ENCODE measurements at regions of chr7 and their contacts with region 1.

Region 1: DNA sequence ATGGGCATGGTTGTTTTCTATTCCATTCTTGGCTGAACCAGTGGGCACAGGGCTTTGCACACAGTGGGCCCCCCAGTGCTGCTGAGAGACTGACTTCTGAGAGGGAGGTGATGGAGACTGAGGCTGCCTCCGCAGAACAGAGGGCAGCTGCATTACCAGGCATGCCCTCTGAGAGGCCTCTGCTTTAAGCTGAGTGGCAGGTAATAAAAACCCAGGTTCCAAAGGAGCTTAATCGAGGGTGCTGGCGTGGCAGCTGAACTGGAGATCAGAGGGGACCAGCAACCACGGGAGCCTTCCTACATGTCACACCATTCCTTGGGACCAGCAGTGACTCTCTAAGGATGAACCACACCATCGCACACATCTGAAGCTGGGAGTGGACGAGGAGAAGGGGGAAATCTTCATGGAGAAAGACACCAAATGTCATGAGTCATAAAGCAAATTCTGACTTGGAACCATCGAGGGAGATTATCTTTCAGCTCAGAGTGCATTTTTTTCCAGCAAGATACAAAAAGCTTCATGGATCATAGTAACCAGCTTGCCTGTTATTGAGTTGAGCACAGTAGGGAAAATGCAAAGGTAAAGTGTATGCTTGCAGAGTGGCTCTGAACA is 24.6 kb downstream of the HIPK2 start:
- DNase-seq: peak in 1 of 2 donors; percentile 62
- ATAC-seq: peak; percentile 38 to 52
- H3K4me3 ChIP-seq: peak overlapping the region in 3 of 4 donors; percentile 0 to 11 (median 6)
- H3K27ac ChIP-seq: peak overlapping the region; percentile 68 to 81 (median 78)
- H3K4me1 ChIP-seq: peaks cover 57 to 64% of the 10 kb centered on the region in 2 donors
- H3K27me3 ChIP-seq: no peaks in the 10 kb centered on the region
- CTCF ChIP-seq: peak; percentile 32 to 62 (median 52)
- POLR2A ChIP-seq: no peak

Region 2: GRCh38 chr7:139651308-139651707 is 101.9 kb before region 1 on chr7:
- in situ Hi-C with region 1: loop called in 1 of 4 experiments (anchors 10 kb)
- intact Hi-C with region 1: no loop called
- DNase-seq: peak in 1 of 2 donors; percentile 45
- ATAC-seq: peak; percentile 47 to 50
- H3K4me3 ChIP-seq: no peak overlapping the region
- H3K27ac ChIP-seq: peak overlapping the region; percentile 59 to 76 (median 71)
- H3K4me1 ChIP-seq: peaks cover 29 to 31% of the 10 kb centered on the region in 2 donors
- H3K27me3 ChIP-seq: no peaks in the 10 kb centered on the region
- CTCF ChIP-seq: no peak
- POLR2A ChIP-seq: no peak

Region 3: DNA sequence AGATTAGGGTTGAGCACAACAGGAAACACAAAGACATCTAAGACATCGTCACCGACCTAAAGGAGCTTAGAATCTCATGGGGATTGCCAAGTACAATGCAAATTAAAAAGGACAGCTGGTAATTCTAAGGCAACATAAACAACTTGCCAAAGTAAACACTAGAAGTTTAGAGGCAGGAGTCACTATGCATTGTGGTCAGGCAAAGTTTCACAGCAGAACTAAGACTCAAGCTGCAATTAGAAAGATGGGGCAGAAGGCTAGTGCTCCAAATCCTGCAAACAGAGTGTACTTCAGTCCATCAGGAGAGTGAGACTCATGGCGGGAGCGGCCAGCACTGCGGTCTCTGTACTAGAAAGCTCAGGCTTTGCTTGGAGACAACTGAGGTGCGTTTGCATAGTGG is 28.1 kb before region 1 on chr7:
- in situ Hi-C with region 1: no loop called
- intact Hi-C with region 1: no loop called
- DNase-seq: no peak
- ATAC-seq: no peak
- H3K4me3 ChIP-seq: no peak overlapping the region
- H3K27ac ChIP-seq: peak overlapping the region; percentile 49 to 93 (median 60)
- H3K4me1 ChIP-seq: peaks cover 63 to 71% of the 10 kb centered on the region in 2 donors
- H3K27me3 ChIP-seq: no peaks in the 10 kb centered on the region
- CTCF ChIP-seq: no peak
- POLR2A ChIP-seq: no peak

Region 4: DNA sequence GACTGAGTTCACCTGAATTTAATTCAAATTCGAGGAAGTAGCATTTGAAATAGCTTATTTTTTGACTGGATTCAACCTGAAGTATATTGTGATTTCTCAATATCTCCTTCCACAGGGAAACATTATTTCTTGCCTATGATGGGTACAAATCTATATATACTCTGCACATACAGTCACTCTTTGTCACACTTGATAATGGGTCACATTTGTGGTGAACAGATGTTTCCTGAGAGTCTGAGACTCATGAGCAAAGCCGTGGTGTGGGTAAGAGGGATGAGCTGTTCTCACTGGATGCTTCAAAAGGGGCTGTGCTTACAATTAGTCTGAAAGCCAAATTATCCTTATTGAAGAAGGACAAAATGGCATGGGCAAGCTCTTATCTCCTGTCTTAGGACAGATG is 57.9 kb after region 1 on chr7:
- in situ Hi-C with region 1: no loop called
- intact Hi-C with region 1: no loop called
- DNase-seq: no peak
- ATAC-seq: no peak
- H3K4me3 ChIP-seq: no peak overlapping the region
- H3K27ac ChIP-seq: no peak overlapping the region
- H3K4me1 ChIP-seq: no peaks in the 10 kb centered on the region
- H3K27me3 ChIP-seq: no peaks in the 10 kb centered on the region
- CTCF ChIP-seq: no peak
- POLR2A ChIP-seq: no peak